CD4-positive, alpha-beta memory T cell (primary cell): ENCODE measurements at regions of chrX and their contacts with region 1.

Region 1: GRCh38 chrX:103607364-103608305 is at the start of gene TCEAL3:
- DNase-seq: peak; percentile 37 to 53 (median 43)
- H3K4me3 ChIP-seq: peak within 1 kb of the TSS in 1 of 2 donors; percentile 45
- H3K4me3 Mint-ChIP-seq: peak within 1 kb of the TSS; percentile 79 to 88 (median 84)
- H3K27ac ChIP-seq: peak within 1 kb of the TSS; percentile 60
- H3K27ac Mint-ChIP-seq: peak within 1 kb of the TSS; percentile 73 to 93 (median 83)
- H3K4me1 ChIP-seq: peaks cover 3% of the 10 kb centered on the region
- H3K4me1 Mint-ChIP-seq: peaks cover 1 to 11% (median 5%) of the 10 kb centered on the region in 4 donors
- H3K27me3 ChIP-seq: no peaks in the 10 kb centered on the region
- H3K27me3 Mint-ChIP-seq: no peaks in the 10 kb centered on the region
- total RNA-seq, gene TCEAL3: 5.7 to 7.7 TPM

Region 2: GRCh38 chrX:103629318-103630170 is 21.9 kb after region 1 on chrX:
- CTCF ChIA-PET with region 1: no interaction called
- POLR2A ChIA-PET with region 1: no interaction called
- intact Hi-C with region 1: loop called (anchors 2 kb)
- DNase-seq: peak; percentile 6 to 34 (median 10)
- H3K4me3 ChIP-seq: peak overlapping the region; percentile 36 to 67
- H3K4me3 Mint-ChIP-seq: peak overlapping the region; percentile 75 to 94 (median 84)
- H3K27ac ChIP-seq: peak overlapping the region; percentile 64
- H3K27ac Mint-ChIP-seq: peak overlapping the region; percentile 41 to 95 (median 86)
- H3K4me1 ChIP-seq: peaks cover 12% of the 10 kb centered on the region
- H3K4me1 Mint-ChIP-seq: peaks cover 7 to 17% (median 13%) of the 10 kb centered on the region in 4 donors
- H3K27me3 ChIP-seq: no peaks in the 10 kb centered on the region
- H3K27me3 Mint-ChIP-seq: no peaks in the 10 kb centered on the region

Region 3: DNA sequence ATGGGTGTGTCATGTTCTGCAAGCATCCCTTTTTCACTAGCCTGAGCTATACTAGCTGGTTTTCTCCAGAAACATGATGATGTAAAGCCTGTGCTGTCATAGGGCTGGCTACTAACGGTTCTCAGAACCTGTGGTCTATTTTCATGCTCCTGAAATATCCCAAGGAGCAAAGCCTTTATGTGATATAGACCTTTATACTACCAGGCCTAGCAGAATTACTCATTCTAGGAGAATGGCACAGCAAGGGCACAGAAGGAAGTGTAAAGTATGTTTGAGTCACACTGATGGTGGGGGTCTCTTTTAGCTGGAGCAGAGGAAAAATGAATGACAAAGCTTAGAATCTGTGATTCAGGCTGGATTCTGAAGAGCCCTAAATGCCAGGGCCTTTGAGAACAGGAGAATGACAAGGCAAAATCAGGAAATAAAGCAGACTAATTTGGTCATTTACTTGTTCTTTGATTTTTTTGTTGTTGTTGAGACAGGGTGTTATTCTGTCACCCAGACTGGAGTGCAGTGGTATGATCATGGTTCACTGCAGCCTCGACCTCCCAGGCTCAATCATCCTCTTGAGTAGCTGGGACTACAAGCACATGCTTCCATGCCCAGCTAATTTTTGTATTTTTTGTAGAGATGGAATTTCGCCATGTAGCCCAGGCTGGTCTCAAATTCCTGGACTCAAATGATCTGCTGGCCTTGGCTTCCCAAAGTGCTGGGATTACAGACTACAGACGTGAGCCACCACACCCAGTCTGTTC is 32.9 kb after region 1 on chrX:
- CTCF ChIA-PET with region 1: no interaction called
- POLR2A ChIA-PET with region 1: no interaction called
- intact Hi-C with region 1: no loop called
- DNase-seq: no peak
- H3K4me3 ChIP-seq: no peak overlapping the region
- H3K4me3 Mint-ChIP-seq: no peak overlapping the region
- H3K27ac ChIP-seq: no peak overlapping the region
- H3K27ac Mint-ChIP-seq: no peak overlapping the region
- H3K4me1 ChIP-seq: no peaks in the 10 kb centered on the region
- H3K4me1 Mint-ChIP-seq: no peaks in the 10 kb centered on the region
- H3K27me3 ChIP-seq: no peaks in the 10 kb centered on the region
- H3K27me3 Mint-ChIP-seq: peaks cover 0 to 5% of the 10 kb centered on the region in 2 donors

Region 4: GRCh38 chrX:104013158-104013557 is 405.5 kb after region 1 on chrX:
- CTCF ChIA-PET with region 1: no interaction called
- POLR2A ChIA-PET with region 1: no interaction called
- intact Hi-C with region 1: no loop called
- DNase-seq: no peak
- H3K4me3 ChIP-seq: no peak overlapping the region
- H3K4me3 Mint-ChIP-seq: no peak overlapping the region
- H3K27ac ChIP-seq: no peak overlapping the region
- H3K27ac Mint-ChIP-seq: no peak overlapping the region
- H3K4me1 ChIP-seq: no peaks in the 10 kb centered on the region
- H3K4me1 Mint-ChIP-seq: no peaks in the 10 kb centered on the region
- H3K27me3 ChIP-seq: no peaks in the 10 kb centered on the region
- H3K27me3 Mint-ChIP-seq: peaks cover 0 to 5% of the 10 kb centered on the region in 2 donors

Region 5: DNA sequence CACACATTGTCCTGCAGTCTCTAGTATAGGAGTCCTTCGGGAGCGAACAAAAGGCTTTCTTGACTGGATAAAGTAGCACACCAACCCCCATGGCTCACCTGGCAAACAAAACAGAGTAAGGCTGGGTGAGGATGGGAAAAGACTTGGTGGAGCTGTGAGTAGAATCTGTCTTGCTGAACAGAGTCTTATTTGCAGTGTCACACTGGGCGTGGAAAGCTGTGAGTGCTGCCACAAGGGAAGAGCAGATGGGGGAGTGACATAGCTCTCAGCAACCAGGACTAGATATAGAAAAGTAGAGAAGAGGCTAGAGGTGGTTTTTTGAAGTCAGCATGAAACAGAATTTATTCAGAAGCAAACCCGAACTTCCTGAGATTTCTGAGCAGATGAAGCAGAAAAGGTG is 784.3 kb after region 1 on chrX:
- CTCF ChIA-PET with region 1: no interaction called
- POLR2A ChIA-PET with region 1: no interaction called
- intact Hi-C with region 1: no loop called
- DNase-seq: no peak
- H3K4me3 ChIP-seq: no peak overlapping the region
- H3K4me3 Mint-ChIP-seq: no peak overlapping the region
- H3K27ac ChIP-seq: no peak overlapping the region
- H3K27ac Mint-ChIP-seq: no peak overlapping the region
- H3K4me1 ChIP-seq: no peaks in the 10 kb centered on the region
- H3K4me1 Mint-ChIP-seq: no peaks in the 10 kb centered on the region
- H3K27me3 ChIP-seq: no peaks in the 10 kb centered on the region
- H3K27me3 Mint-ChIP-seq: no peaks in the 10 kb centered on the region